ENCODE measurements at regions of chr1 and their contacts with region 1.

Region 1: DNA sequence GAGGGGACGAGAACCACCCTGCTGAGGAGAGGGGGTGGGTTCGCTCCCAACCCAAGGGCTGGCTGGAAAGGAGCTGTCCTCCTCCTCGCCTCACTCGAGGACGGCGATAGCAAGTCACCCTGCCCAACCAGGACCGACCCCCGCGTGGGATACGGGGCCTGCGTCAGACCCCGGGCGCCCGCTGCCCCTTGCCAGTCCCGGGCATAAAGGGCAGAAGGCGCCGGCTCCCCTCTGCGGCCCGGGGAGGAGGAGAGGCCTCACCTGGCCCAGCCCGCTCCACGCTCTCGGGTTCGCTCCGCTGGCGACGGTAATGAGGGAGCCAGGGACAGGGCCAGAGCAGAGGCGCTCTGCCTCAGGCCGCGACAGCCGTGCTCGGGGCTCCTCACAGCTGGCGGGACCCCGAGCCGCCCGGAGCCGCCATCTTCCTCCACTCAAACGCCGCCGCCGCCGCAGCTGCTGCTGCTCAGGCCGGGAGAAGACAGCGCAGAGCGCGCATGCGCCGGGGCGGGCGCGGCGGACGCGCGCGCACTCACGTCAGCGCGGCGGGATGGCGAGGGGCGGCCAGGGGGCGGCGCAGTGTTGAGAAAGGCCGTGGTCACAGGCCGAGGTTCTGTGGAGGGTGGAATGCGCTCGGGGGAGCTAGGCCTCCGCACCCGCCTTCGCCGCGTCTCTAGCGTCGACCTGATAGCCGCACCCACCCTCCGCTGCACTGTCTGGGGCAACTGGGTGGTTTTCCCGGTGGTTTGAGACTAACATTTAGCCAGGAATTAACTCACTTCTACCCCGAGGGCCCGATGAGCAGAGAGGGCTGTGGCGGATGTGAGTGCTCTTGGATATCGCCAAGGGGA is at the start of gene FBXO42:
- DNase-seq: peak; percentile 96
- H3K4me3 ChIP-seq: peak within 1 kb of the TSS; percentile 66 to 88 (median 85)
- H3K27ac ChIP-seq: peak within 1 kb of the TSS; percentile 86
- H3K4me1 ChIP-seq: peaks cover 26% of the 10 kb centered on the region
- H3K27me3 ChIP-seq: no peaks in the 10 kb centered on the region
- CTCF ChIP-seq: peak; percentile 36 to 50
- POLR2A ChIP-seq: peak; percentile 80
- total RNA-seq, gene FBXO42: 16.3 and 17.3 TPM in 2 replicates

Region 2: GRCh38 chr1:16243936-16244649 is 108.1 kb before region 1 on chr1:
- CTCF ChIA-PET with region 1: interaction called, 5 read pairs
- POLR2A ChIA-PET with region 1: interaction called, 4 read pairs
- dilution Hi-C with region 1: no loop called
- intact Hi-C with region 1: loop called (anchors 1 kb)
- DNase-seq: peak; percentile 87
- H3K4me3 ChIP-seq: no peak overlapping the region
- H3K27ac ChIP-seq: no peak overlapping the region
- H3K4me1 ChIP-seq: peaks cover 17% of the 10 kb centered on the region
- H3K27me3 ChIP-seq: no peaks in the 10 kb centered on the region
- CTCF ChIP-seq: peak; percentile 83 to 85
- POLR2A ChIP-seq: no peak

Region 3: GRCh38 chr1:16266411-16267118 is 85.7 kb before region 1 on chr1:
- CTCF ChIA-PET with region 1: interaction called, 3 read pairs
- POLR2A ChIA-PET with region 1: no interaction called
- dilution Hi-C with region 1: no loop called
- intact Hi-C with region 1: loop called (anchors 5 kb)
- DNase-seq: peak; percentile 96
- H3K4me3 ChIP-seq: no peak overlapping the region
- H3K27ac ChIP-seq: peak overlapping the region; percentile 30
- H3K4me1 ChIP-seq: peaks cover 27% of the 10 kb centered on the region
- H3K27me3 ChIP-seq: no peaks in the 10 kb centered on the region
- CTCF ChIP-seq: no peak
- POLR2A ChIP-seq: no peak

Measured in endothelial cell of umbilical vein (primary cell).